Calu3 (cell line): ENCODE measurements at regions of chr1 and their contacts with region 1.

Region 1: GRCh38 chr1:23224714-23225648 is 7.7 kb upstream of the HTR1D start:
- DNase-seq: no peak
- H3K4me3 Mint-ChIP-seq: no peak overlapping the region
- H3K27ac Mint-ChIP-seq: no peak overlapping the region
- H3K4me1 Mint-ChIP-seq: peaks cover 8% of the 10 kb centered on the region
- H3K27me3 Mint-ChIP-seq: peaks cover 11% of the 10 kb centered on the region
- CTCF ChIP-seq: no peak

Region 2: GRCh38 chr1:23273450-23274133 is 48.6 kb after region 1 on chr1:
- CTCF ChIA-PET with region 1: no interaction called
- intact Hi-C with region 1: loop called (anchors 5 kb)
- DNase-seq: peak; percentile 5
- H3K4me3 Mint-ChIP-seq: no peak overlapping the region
- H3K27ac Mint-ChIP-seq: no peak overlapping the region
- H3K4me1 Mint-ChIP-seq: peaks cover 10% of the 10 kb centered on the region
- H3K27me3 Mint-ChIP-seq: no peaks in the 10 kb centered on the region
- CTCF ChIP-seq: no peak